ENCODE measurements at regions of chr12 and their contacts with region 1.

Region 1: DNA sequence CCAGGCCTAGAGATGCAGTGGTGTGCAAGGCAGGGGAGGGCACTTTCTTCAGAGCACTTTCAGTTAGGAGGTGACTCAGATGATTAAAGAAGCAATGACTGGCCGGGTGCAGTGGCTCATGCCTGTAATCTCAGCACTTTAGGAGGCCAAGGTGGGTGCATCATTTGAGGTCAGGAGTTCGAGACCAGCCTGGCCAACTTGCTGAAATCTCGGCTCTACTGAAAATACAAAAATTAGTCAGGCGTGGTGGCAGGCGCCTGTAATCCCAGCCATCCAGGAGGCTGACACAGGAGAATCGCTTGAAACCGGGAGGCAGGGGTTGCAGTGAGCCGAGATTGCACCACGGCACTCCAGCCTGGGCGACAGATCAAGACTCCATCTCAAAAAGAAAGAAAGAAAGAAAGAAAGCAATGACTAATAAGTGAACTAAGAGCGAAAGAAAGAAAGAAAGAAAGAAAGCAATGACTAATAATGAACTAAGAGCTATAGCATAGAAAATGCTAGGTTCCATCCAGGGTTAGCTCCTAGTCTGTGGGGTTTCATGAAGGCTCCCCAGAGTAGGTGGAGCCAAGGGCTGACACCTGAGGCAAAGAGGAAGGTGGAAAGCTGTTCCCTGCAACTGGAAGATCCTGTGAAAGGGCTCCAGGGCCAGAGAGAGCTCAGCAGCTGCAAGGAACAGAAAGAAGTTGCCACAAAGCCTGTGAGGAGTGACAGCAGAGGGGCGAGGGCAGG is 334.5 kb downstream of the CACNA1C start:
- DNase-seq: peak; percentile 10
- H3K4me3 Mint-ChIP-seq: no peak overlapping the region
- H3K27ac Mint-ChIP-seq: no peak overlapping the region
- H3K4me1 Mint-ChIP-seq: no peaks in the 10 kb centered on the region
- H3K27me3 Mint-ChIP-seq: peaks cover 31% of the 10 kb centered on the region

Region 2: GRCh38 chr12:2358986-2359658 is 28.1 kb before region 1 on chr12:
- intact Hi-C with region 1: loop called (anchors 1 kb)
- DNase-seq: no peak
- H3K4me3 Mint-ChIP-seq: peak overlapping the region; percentile 12
- H3K27ac Mint-ChIP-seq: peak overlapping the region; percentile 49
- H3K4me1 Mint-ChIP-seq: peaks cover 53% of the 10 kb centered on the region
- H3K27me3 Mint-ChIP-seq: peaks cover 7% of the 10 kb centered on the region

Region 3: GRCh38 chr12:2490831-2491230 is 103.6 kb after region 1 on chr12:
- intact Hi-C with region 1: no loop called
- DNase-seq: no peak
- H3K4me3 Mint-ChIP-seq: no peak overlapping the region
- H3K27ac Mint-ChIP-seq: no peak overlapping the region
- H3K4me1 Mint-ChIP-seq: no peaks in the 10 kb centered on the region
- H3K27me3 Mint-ChIP-seq: peaks cover 10% of the 10 kb centered on the region

Region 4: DNA sequence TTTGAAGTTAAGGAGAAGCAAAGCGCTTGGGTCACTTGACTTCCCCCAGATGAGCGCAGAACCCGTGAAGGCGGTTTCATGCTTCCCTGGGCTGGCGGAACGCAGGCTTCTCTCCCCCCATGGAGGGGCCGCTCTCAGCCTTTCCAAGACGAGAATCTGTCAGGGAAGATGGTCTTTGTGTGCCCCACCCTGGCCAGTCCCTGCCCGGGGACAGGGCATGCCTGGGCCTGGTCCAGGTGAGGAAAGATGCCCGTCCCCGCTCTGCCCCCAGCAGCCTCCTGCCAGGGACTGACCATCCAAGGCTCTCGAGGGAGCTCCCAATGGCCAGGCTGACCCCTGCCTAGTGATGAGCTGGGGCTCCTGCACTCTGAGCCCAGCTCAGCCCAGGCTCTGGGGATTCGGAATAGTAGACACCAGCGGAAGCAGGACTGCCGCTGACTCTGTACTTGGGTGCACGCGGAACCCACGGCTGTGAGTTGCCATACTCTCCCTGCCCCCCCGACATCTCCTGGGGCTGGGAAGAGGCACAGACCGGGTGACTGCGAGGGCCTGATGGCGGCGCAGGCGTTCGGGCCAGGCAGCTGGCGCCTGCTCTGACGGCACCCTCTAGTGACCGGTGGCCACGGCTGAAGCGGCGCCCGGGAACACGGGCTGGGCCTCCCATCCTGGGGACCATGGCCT is 265.3 kb after region 1 on chr12:
- intact Hi-C with region 1: no loop called
- DNase-seq: no peak
- H3K4me3 Mint-ChIP-seq: no peak overlapping the region
- H3K27ac Mint-ChIP-seq: no peak overlapping the region
- H3K4me1 Mint-ChIP-seq: no peaks in the 10 kb centered on the region
- H3K27me3 Mint-ChIP-seq: peaks cover 11% of the 10 kb centered on the region